ENCODE measurements at regions of chr20 and their contacts with region 1.

Region 1: GRCh38 chr20:48787861-48788375 is 39.9 kb downstream of the PREX1 start:
- DNase-seq: peak; percentile 18
- ATAC-seq: peak; percentile 16
- H3K4me3 Mint-ChIP-seq: peak overlapping the region; percentile 21
- H3K27ac Mint-ChIP-seq: peak overlapping the region; percentile 88
- H3K4me1 Mint-ChIP-seq: no peaks in the 10 kb centered on the region
- H3K27me3 Mint-ChIP-seq: no peaks in the 10 kb centered on the region
- CTCF ChIP-seq: no peak

Region 2: GRCh38 chr20:48711693-48712456 is 76.0 kb before region 1 on chr20:
- CTCF ChIA-PET with region 1: no interaction called
- POLR2A ChIA-PET with region 1: interaction called, 24 read pairs
- intact Hi-C with region 1: loop called (anchors 2 kb)
- DNase-seq: no peak
- ATAC-seq: peak; percentile 23
- H3K4me3 Mint-ChIP-seq: peak overlapping the region; percentile 74
- H3K27ac Mint-ChIP-seq: peak overlapping the region; percentile 87
- H3K4me1 Mint-ChIP-seq: peaks cover 83% of the 10 kb centered on the region
- H3K27me3 Mint-ChIP-seq: no peaks in the 10 kb centered on the region
- CTCF ChIP-seq: no peak

Region 3: GRCh38 chr20:48717095-48717672 is 70.7 kb before region 1 on chr20:
- CTCF ChIA-PET with region 1: interaction called, 3 read pairs
- POLR2A ChIA-PET with region 1: interaction called, 24 read pairs
- intact Hi-C with region 1: loop called (anchors 2 kb)
- DNase-seq: no peak
- ATAC-seq: peak; percentile 29
- H3K4me3 Mint-ChIP-seq: peak overlapping the region; percentile 64
- H3K27ac Mint-ChIP-seq: peak overlapping the region; percentile 84
- H3K4me1 Mint-ChIP-seq: peaks cover 98% of the 10 kb centered on the region
- H3K27me3 Mint-ChIP-seq: no peaks in the 10 kb centered on the region
- CTCF ChIP-seq: no peak

Region 4: GRCh38 chr20:48750947-48751635 is 36.8 kb before region 1 on chr20:
- CTCF ChIA-PET with region 1: no interaction called
- POLR2A ChIA-PET with region 1: interaction called, 5 read pairs
- intact Hi-C with region 1: loop called (anchors 5 kb)
- DNase-seq: no peak
- ATAC-seq: peak; percentile 23
- H3K4me3 Mint-ChIP-seq: no peak overlapping the region
- H3K27ac Mint-ChIP-seq: peak overlapping the region; percentile 88
- H3K4me1 Mint-ChIP-seq: peaks cover 84% of the 10 kb centered on the region
- H3K27me3 Mint-ChIP-seq: no peaks in the 10 kb centered on the region
- CTCF ChIP-seq: no peak

Region 5: GRCh38 chr20:48760403-48760983 is 27.4 kb before region 1 on chr20:
- CTCF ChIA-PET with region 1: no interaction called
- POLR2A ChIA-PET with region 1: interaction called, 4 read pairs
- intact Hi-C with region 1: loop called (anchors 1 kb)
- DNase-seq: no peak
- ATAC-seq: peak; percentile 73
- H3K4me3 Mint-ChIP-seq: peak overlapping the region; percentile 75
- H3K27ac Mint-ChIP-seq: peak overlapping the region; percentile 95
- H3K4me1 Mint-ChIP-seq: peaks cover 91% of the 10 kb centered on the region
- H3K27me3 Mint-ChIP-seq: no peaks in the 10 kb centered on the region
- CTCF ChIP-seq: no peak

Region 6: DNA sequence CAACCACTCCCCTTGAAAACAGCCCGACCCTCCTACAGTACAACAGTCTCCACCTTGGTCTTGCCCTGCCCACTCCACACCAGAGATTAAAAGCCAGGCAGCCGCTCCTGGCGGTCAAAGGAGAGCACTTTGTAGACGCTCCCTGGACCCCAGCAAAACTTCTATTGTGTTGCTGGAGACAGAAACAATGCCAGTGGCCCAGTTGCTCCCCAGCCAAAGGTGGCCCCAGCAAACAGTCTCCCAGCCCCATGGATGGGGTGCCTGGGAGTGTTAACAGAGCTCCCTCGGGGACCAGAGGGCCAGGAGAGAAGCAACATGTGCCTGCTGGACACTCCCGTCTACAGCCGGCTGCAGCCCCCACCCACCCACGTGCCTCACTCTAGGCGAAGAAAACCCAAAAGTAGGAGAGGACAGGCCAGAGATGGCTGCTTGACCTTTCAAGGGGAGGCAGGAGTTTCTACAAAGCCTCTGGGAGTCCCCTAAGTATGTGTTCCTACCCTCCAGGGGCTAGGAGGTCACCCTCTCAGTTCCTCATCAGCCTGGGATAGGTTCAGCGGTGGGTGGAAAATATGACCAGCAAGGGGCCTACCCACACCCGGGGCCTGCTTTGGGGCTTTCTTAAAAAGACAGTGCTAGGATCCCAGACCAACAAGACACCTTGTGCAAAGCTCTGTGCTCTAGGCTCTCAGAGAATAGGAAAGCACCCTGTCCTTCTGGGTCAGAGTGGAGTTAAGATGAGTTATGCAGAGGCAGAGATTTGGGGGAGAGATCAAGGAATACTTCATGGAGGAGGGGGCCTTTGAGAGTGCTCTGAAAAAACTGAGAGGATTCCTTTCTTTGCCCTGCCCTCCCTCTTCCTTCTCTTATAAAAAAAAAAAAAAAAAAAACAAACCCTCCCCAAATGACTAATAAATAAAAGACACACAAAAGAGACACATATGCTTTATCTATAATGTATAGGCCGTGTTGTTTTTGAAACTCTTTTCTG is 58.9 kb after region 1 on chr20:
- CTCF ChIA-PET with region 1: no interaction called
- POLR2A ChIA-PET with region 1: interaction called, 6 read pairs
- intact Hi-C with region 1: loop called (anchors 1 kb)
- DNase-seq: peak; percentile 61
- ATAC-seq: peak; percentile 97
- H3K4me3 Mint-ChIP-seq: peak overlapping the region; percentile 39
- H3K27ac Mint-ChIP-seq: peak overlapping the region; percentile 80
- H3K4me1 Mint-ChIP-seq: peaks cover 50% of the 10 kb centered on the region
- H3K27me3 Mint-ChIP-seq: no peaks in the 10 kb centered on the region
- CTCF ChIP-seq: no peak